ENCODE measurements at regions of chr17 and their contacts with region 1.

Region 1: GRCh38 chr17:50269477-50270434 is 4.5 kb upstream of the TMEM92 start:
- DNase-seq: peak; percentile 88
- ATAC-seq: peak; percentile 94
- H3K4me3 Mint-ChIP-seq: no peak overlapping the region
- H3K27ac Mint-ChIP-seq: no peak overlapping the region
- H3K4me1 Mint-ChIP-seq: peaks cover 9% of the 10 kb centered on the region
- H3K27me3 Mint-ChIP-seq: peaks cover 11% of the 10 kb centered on the region
- CTCF ChIP-seq: peak; percentile 73

Region 2: GRCh38 chr17:50071692-50072486 is 197.9 kb before region 1 on chr17:
- CTCF ChIA-PET with region 1: no interaction called
- POLR2A ChIA-PET with region 1: no interaction called
- intact Hi-C with region 1: no loop called
- DNase-seq: no peak
- ATAC-seq: no peak
- H3K4me3 Mint-ChIP-seq: no peak overlapping the region
- H3K27ac Mint-ChIP-seq: no peak overlapping the region
- H3K4me1 Mint-ChIP-seq: no peaks in the 10 kb centered on the region
- H3K27me3 Mint-ChIP-seq: no peaks in the 10 kb centered on the region
- CTCF ChIP-seq: no peak

Region 3: DNA sequence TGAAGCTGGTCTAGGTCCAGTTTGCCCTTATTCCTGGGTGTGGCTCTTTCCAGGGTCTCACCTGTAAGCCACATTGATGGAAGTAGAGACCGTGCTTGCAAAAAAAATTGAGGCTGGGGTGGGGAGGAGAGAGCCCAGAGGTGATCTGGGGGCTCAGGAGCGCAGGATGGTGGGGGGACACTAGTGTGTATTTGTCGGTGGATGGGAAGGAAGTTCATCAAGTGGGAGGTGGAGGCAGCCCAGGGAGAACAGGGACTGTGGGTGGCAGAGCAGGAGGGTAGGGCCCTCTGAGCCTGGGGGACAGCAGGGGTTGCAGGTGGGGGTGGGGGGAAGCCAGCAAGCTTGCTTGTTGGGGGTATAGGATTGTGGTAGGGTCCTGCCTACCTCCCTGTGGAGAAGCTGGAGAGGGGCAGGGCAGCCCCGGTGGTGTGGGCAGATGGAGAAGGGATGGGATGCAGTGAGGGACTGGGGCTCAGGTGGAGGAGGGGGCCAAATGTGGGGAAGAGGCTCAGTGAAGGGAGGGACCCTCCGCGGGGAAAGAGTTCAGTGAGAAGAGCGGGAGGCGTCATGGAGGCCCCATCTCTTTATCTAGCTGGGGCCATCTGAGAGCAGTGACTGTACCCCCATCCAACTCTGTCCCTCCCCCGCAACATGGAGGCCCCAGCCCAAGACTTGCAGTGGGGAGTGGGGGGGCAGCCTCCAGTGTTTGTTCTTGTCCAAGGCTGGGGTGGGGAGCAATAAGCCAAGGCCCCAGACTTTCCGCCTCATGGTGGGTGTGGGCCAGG is 12.7 kb before region 1 on chr17:
- CTCF ChIA-PET with region 1: interaction called, 11 read pairs
- POLR2A ChIA-PET with region 1: no interaction called
- intact Hi-C with region 1: no loop called
- DNase-seq: no peak
- ATAC-seq: no peak
- H3K4me3 Mint-ChIP-seq: no peak overlapping the region
- H3K27ac Mint-ChIP-seq: no peak overlapping the region
- H3K4me1 Mint-ChIP-seq: no peaks in the 10 kb centered on the region
- H3K27me3 Mint-ChIP-seq: no peaks in the 10 kb centered on the region
- CTCF ChIP-seq: no peak

Region 4: DNA sequence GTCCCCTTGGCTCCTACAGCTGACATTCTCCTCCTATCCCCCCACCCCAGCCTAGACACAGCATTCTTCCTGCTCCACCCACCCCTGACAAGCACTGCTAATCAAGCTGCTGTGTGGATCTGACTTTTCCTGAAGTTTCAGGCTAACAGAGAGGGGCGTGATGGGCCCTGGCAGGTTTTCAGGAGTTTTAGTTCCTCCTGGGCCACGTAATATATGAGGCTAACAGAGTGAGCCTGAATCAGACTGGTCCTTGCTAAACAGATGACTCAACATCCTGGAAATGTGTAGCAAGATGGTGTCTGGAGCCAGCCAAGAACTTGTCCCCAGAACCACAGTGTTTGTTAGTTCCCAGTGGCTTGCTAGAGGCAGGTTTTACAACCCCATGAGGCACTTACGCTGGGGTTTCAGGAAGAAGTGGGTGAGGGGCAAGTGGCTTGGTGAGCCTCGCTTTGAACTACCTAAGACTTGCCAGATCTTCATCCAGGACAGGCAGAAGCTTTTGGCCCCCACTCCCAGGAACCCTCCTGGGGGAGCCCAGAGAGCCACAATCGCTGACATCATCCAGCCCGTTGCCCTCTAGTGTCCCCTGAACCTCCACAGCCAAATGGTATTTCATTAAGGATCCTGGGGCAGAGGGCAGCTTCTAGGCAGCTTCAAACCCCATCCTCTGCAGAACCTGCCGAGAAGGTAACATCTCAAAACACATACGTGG is 20.4 kb after region 1 on chr17:
- CTCF ChIA-PET with region 1: interaction called, 46 read pairs
- POLR2A ChIA-PET with region 1: interaction called, 3 read pairs
- intact Hi-C with region 1: no loop called
- DNase-seq: peak; percentile 33
- ATAC-seq: peak; percentile 93
- H3K4me3 Mint-ChIP-seq: no peak overlapping the region
- H3K27ac Mint-ChIP-seq: peak overlapping the region; percentile 41
- H3K4me1 Mint-ChIP-seq: peaks cover 9% of the 10 kb centered on the region
- H3K27me3 Mint-ChIP-seq: peaks cover 22% of the 10 kb centered on the region
- CTCF ChIP-seq: no peak